ENCODE measurements at regions of chr17 and their contacts with region 1.

Region 1: GRCh38 chr17:38735161-38735997 is 5.2 kb downstream of the CISD3 start:
- DNase-seq: peak; percentile 85
- ATAC-seq: peak; percentile 34
- H3K4me3 Mint-ChIP-seq: no peak overlapping the region
- H3K27ac Mint-ChIP-seq: peak overlapping the region; percentile 82; the same call in 1 of the 2 replicates
- H3K4me1 Mint-ChIP-seq: peaks cover 26% of the 10 kb centered on the region
- H3K27me3 Mint-ChIP-seq: no peaks in the 10 kb centered on the region; the same call in 1 of the 2 replicates
- CTCF ChIP-seq: peak; percentile 94

Region 2: DNA sequence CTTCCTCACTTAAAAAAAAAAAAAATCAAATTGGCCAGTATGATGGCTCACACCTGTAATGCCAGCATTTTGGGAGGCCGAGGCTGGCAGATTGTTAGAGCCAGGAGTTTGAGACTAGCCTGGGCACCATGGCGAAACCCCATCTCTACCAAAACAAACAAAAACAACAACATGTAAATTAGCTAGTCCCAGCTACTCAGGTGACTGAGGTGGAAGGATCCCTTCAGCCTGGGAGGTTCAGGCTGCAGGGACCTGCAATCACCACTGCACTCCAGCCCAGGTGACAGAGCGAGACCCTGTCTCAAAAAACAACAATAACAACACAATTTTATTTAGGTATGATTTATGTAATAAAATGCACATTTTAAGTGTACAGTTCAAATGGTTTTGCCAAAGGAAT is 54.3 kb before region 1 on chr17:
- CTCF ChIA-PET with region 1: interaction called, 60 read pairs
- POLR2A ChIA-PET with region 1: no interaction called
- DNase-seq: no peak
- ATAC-seq: peak; percentile 30
- H3K4me3 Mint-ChIP-seq: no peak overlapping the region
- H3K27ac Mint-ChIP-seq: peak overlapping the region; percentile 81; the same call in 1 of the 2 replicates
- H3K4me1 Mint-ChIP-seq: peaks cover 12% of the 10 kb centered on the region
- H3K27me3 Mint-ChIP-seq: peaks cover 33% of the 10 kb centered on the region
- CTCF ChIP-seq: no peak

Region 3: DNA sequence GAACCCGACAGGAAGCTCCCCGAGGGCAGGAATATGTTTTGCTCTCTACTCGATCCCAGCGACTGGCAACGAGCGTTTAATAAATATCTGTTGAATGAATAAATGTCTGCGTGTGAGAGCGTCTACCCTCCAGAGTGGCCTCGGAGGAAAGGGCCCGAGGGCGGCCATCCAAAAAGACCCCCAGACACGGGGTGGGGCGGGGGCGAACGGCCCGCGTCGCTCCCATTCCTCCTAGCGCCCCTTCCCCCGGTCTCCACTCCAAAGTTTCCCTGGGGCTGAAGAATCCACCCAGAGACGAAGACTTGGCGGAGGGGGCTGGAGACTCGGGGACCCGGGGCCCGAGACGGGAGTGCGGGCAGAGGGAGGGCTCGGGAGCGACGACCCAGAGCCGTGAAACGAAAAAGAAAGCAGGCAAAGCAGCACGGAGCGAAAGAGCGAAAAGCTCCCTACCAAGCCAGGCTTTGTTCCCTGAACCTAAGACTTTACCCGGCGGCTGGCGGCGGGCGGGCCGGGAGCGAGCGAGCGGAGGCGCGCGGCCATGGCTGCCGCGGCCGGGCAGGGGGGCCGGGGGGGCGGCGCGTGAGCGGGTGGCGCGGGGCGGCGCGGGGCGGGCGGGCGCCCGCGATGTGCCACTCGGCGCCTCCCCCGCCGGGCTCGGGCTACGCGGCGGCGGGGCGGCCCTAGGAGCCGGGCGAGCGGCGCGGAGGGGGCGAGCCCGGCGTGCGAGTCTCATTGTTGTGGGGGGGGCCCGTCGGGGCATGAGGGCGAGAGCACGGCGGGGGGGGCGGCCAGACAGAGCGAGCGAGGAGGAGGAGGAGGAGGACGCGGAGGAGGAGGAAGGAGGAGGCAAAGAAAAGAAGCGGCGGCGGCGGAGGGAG is 30.5 kb before region 1 on chr17 and contains the start of gene MLLT6:
- CTCF ChIA-PET with region 1: interaction called, 28 read pairs
- POLR2A ChIA-PET with region 1: interaction called, 3 read pairs
- DNase-seq: peak; percentile 79
- ATAC-seq: peak; percentile 19
- H3K4me3 Mint-ChIP-seq: peak within 1 kb of the TSS; percentile 88
- H3K27ac Mint-ChIP-seq: peak within 1 kb of the TSS; percentile 83
- H3K4me1 Mint-ChIP-seq: peaks cover 53% of the 10 kb centered on the region
- H3K27me3 Mint-ChIP-seq: peaks cover 89% of the 10 kb centered on the region
- CTCF ChIP-seq: no peak
- total RNA-seq, gene MLLT6: 34.4 to 48.0 TPM (median 36.6 TPM) in 3 replicates

Region 4: DNA sequence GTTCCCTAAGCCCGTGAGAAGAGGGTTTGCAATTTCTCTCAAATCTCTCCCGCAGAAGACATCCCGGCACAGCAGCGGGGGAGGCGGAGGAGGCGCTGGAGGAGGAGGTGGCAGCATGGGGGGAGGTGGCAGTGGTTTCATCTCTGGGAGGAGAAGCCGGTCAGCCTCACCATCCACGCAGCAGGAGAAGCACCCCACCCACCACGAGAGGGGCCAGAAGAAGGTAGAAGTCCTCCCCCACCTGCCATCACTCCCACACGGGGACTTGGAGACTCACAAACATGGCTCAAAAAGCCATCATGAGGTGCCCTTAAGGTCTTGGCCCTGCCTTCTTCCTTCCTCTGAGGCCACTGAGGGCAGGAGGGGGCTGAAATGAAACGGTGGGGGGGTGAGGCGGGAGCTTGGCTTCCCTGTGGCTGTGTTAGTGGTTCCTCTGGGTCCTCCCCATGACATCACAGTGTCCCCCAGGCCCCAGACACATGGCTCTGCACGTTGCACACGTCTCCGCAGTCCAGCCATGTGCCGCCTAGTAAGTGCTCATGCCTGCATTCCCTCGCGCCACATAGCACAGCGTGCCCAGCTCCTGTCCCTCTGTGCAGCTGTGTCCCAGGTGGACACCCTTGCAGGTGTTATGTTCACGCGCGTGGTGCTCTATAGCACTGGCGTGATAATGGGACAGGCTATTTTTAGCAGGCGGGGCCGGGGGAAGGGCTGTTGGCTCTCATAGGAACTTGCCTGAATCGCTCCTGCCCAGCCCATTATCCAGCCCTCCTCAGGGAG is 23.4 kb before region 1 on chr17:
- CTCF ChIA-PET with region 1: interaction called, 28 read pairs
- POLR2A ChIA-PET with region 1: interaction called, 4 read pairs
- DNase-seq: no peak
- ATAC-seq: no peak
- H3K4me3 Mint-ChIP-seq: no peak overlapping the region
- H3K27ac Mint-ChIP-seq: no peak overlapping the region
- H3K4me1 Mint-ChIP-seq: peaks cover 58% of the 10 kb centered on the region
- H3K27me3 Mint-ChIP-seq: peaks cover 30% of the 10 kb centered on the region
- CTCF ChIP-seq: no peak

Region 5: GRCh38 chr17:38719943-38720641 is 15.3 kb before region 1 on chr17:
- CTCF ChIA-PET with region 1: interaction called, 37 read pairs
- POLR2A ChIA-PET with region 1: interaction called, 4 read pairs
- DNase-seq: peak; percentile 85
- ATAC-seq: peak; percentile 69
- H3K4me3 Mint-ChIP-seq: peak overlapping the region; percentile 54
- H3K27ac Mint-ChIP-seq: no peak overlapping the region
- H3K4me1 Mint-ChIP-seq: peaks cover 39% of the 10 kb centered on the region
- H3K27me3 Mint-ChIP-seq: peaks cover 12% of the 10 kb centered on the region
- CTCF ChIP-seq: no peak

Region 6: GRCh38 chr17:38752119-38752929 is 16.9 kb after region 1 on chr17 and contains the start of gene PSMB3:
- CTCF ChIA-PET with region 1: interaction called, 45 read pairs
- POLR2A ChIA-PET with region 1: no interaction called
- DNase-seq: peak; percentile 93
- ATAC-seq: peak; percentile 76
- H3K4me3 Mint-ChIP-seq: peak within 1 kb of the TSS; percentile 97
- H3K27ac Mint-ChIP-seq: peak within 1 kb of the TSS; percentile 96
- H3K4me1 Mint-ChIP-seq: peaks cover 16% of the 10 kb centered on the region
- H3K27me3 Mint-ChIP-seq: peaks cover 2% of the 10 kb centered on the region
- CTCF ChIP-seq: no peak
- total RNA-seq, gene PSMB3: 266 to 273 TPM (median 266 TPM) in 3 replicates

Measured in WTC11 (cell line).